ENCODE measurements at regions of chr14 and their contacts with region 1.

Region 1: DNA sequence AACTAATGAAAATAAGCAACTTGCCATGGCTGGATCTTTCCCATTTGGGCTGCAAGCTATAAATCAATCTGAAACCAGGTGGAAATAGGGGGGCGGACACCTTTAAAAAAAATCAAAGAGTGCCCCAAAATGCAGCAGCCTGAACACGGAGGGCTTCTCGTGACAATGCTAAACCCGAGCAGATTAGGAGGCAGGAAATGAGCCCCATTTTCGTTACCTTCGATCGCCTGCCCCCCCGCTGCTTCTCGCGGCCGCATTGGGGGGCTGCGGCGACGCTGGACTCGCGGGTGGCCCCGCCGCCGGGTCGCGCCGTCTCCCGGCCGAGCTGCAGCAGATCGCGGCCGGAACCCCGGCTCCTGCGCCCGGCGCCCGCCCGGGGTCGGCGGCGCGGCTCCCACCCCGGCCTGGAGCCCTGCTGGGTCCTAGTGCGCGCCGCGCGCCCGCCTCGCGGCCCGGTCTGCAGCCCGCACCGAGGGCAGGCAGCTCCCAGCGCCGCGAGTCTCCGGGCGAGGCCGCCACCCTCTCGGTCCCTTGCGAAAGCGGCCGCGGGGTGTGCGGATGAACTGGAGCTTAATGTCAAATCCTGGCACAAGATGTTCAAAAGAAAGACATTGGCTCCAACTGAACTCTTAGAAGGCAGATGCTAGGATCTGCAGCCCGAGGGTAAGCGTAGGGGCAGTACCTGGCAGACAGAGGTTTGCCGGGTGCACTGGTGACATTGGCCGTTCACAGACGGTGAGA is 201.9 kb upstream of the FOXN3 start:
- DNase-seq: peak; percentile 82
- ATAC-seq: peak; percentile 38
- H3K4me3 Mint-ChIP-seq: peak overlapping the region; percentile 95
- H3K27ac Mint-ChIP-seq: peak overlapping the region; percentile 94
- H3K4me1 Mint-ChIP-seq: peaks cover 70% of the 10 kb centered on the region
- H3K27me3 Mint-ChIP-seq: no peaks in the 10 kb centered on the region

Region 2: DNA sequence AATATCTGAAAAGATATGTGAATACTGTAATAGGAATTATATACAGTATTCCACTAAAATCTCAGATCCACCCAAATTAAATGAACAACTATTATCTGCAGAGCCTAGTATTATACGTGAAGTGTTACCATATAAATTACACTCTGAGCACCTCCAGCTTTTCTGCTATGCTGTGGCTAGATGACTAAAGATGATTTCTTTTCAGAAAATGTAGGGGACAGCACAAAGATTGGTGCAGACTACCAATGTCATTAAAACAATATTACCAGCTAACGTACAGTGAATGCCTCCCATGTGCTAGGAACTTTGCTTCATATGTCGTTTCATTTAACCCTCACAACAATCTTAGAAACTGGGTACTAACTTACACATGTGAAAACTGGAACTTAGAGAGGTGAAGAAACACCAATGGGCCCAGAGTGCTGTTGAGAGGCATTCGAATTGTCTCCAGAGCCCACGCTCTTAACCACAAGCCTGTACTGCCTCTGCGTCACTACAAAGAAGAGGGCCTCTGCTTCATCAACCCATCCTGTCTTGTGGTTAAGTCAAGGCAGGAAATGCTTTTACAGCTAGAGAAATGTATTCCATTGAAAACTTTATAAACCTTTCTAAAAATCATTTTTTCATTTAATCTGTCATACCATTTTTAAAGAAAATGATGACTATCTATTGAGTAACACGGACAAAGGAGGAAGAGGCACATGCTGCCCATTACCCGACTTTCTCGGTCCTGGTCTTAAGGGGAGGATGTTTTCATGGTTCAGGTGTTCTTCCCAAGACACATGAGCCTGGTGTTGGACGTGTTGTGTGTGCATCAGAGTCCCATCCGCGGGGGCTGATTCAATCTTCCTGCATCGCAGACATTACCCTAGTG is 1612.8 kb before region 1 on chr14:
- CTCF ChIA-PET with region 1: no interaction called
- POLR2A ChIA-PET with region 1: no interaction called
- intact Hi-C with region 1: loop called in 1 of 2 experiments (anchors 10 kb)
- DNase-seq: peak; percentile 83
- ATAC-seq: peak; percentile 89
- H3K4me3 Mint-ChIP-seq: peak overlapping the region; percentile 82
- H3K27ac Mint-ChIP-seq: peak overlapping the region; percentile 92
- H3K4me1 Mint-ChIP-seq: peaks cover 63% of the 10 kb centered on the region
- H3K27me3 Mint-ChIP-seq: no peaks in the 10 kb centered on the region

Region 3: GRCh38 chr14:89416002-89416995 is 202.7 kb before region 1 on chr14:
- CTCF ChIA-PET with region 1: no interaction called
- POLR2A ChIA-PET with region 1: interaction called, 3 read pairs
- intact Hi-C with region 1: loop called in 1 of 2 experiments (anchors 2 kb)
- DNase-seq: peak; percentile 98
- ATAC-seq: peak; percentile 80
- H3K4me3 Mint-ChIP-seq: peak overlapping the region; percentile 84
- H3K27ac Mint-ChIP-seq: peak overlapping the region; percentile 85
- H3K4me1 Mint-ChIP-seq: peaks cover 51% of the 10 kb centered on the region
- H3K27me3 Mint-ChIP-seq: no peaks in the 10 kb centered on the region

Region 4: DNA sequence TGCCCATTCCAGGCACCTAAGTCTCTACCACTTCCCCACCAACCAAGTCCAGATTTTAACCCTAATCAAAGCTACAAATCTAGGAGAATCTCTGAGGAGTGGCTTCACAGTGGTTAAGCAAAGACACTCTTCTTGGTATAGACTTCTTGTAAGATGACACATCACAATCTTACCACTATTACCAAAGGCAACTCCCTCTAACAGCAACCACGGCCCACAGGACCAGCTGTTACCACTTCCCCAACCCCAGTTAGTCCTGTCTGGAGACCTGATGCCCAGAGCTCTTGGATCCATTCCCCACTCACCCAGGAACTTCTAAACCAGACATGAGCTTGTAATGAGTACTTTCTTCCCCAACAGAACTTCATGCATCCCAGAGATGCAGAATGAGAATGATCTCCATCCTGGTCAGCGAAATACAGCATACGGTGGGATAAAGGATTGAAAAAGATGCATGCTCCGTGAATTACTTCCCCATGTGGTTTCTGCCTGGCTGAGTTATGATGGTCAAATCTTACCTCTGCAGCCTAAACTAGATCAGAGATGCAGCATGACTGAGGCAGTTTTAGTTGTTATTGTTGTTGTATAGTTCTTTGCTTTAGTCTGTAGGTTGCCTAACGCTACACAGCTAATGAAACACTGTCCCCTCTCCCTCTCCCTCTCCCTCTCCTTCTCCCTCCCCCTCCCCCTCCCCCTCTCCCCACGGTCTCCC is 114.2 kb before region 1 on chr14:
- CTCF ChIA-PET with region 1: interaction called, 3 read pairs
- POLR2A ChIA-PET with region 1: no interaction called
- intact Hi-C with region 1: loop called in 1 of 2 experiments (anchors 5 kb)
- DNase-seq: peak; percentile 59
- ATAC-seq: peak; percentile 40
- H3K4me3 Mint-ChIP-seq: no peak overlapping the region
- H3K27ac Mint-ChIP-seq: peak overlapping the region; percentile 23
- H3K4me1 Mint-ChIP-seq: peaks cover 53% of the 10 kb centered on the region
- H3K27me3 Mint-ChIP-seq: no peaks in the 10 kb centered on the region

Region 5: DNA sequence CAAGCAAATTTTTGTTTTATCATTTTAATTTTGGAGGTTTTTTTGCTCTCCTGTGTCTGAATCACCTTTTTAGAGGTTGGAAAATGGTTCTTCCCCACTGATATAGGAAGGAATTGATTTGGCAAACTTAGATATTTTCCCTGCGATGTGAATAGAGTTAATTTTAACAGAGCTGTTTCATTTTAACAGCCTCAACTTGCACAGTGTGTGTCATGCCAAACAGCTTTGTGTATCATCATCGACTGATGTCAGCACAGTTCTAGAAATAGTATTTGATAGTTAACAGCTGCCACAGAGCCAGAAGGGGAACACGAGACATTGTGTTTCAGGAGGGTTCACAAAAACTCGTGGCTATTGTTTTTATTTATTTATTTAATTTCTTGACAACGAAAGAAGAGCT is 41.2 kb after region 1 on chr14:
- CTCF ChIA-PET with region 1: no interaction called
- POLR2A ChIA-PET with region 1: no interaction called
- intact Hi-C with region 1: no loop called
- DNase-seq: no peak
- ATAC-seq: no peak
- H3K4me3 Mint-ChIP-seq: no peak overlapping the region
- H3K27ac Mint-ChIP-seq: no peak overlapping the region
- H3K4me1 Mint-ChIP-seq: peaks cover 11% of the 10 kb centered on the region
- H3K27me3 Mint-ChIP-seq: no peaks in the 10 kb centered on the region

Region 6: DNA sequence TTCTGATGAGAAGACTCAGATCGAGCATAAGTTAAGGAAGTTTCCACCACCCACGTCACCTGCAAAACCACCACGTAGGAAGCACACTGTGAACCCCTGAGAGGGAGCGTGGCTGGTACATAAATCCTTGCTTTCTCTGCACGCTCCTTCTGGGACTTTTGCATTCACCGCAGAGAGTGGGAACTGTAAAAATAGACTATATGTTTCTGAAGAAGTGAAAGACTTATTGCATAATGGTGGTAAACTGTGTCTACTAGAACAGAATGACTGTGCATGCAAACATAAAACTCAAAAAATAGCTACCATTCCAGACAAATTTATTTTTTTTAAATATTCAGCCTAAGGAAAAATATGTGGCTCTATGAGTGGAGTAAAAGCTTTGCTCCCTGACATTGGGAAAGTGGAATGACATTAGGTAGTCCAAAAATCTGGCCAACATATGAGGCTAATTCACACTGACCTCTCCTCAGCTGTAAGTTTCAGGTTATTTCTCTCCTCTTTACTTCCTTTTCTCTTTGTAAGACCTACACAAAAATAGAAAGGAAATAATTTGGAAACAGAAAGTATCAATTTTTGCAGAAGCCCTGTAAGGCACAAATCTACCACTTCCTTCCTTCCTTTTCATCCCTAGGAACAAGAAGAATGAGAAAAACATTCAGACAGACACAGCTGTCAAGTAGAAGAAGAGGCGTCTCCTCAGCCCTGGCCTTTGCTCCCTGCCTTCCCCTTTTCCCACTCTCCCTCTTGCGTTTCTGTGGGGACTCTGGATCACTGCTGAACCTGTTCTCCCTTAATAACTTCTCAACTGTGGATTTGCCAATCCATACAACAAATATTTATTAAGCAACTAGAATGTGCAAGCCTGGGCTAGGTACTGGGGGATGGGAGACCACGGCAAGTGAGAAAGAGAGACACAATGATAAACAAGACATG is 62.4 kb after region 1 on chr14:
- CTCF ChIA-PET with region 1: no interaction called
- POLR2A ChIA-PET with region 1: no interaction called
- intact Hi-C with region 1: loop called (anchors 2 to 5 kb)
- DNase-seq: peak; percentile 81
- ATAC-seq: peak; percentile 88
- H3K4me3 Mint-ChIP-seq: peak overlapping the region; percentile 58
- H3K27ac Mint-ChIP-seq: peak overlapping the region; percentile 83
- H3K4me1 Mint-ChIP-seq: peaks cover 41% of the 10 kb centered on the region
- H3K27me3 Mint-ChIP-seq: no peaks in the 10 kb centered on the region

Region 7: GRCh38 chr14:89750281-89750755 is 131.3 kb after region 1 on chr14:
- CTCF ChIA-PET with region 1: interaction called, 6 read pairs
- POLR2A ChIA-PET with region 1: interaction called, 9 read pairs
- intact Hi-C with region 1: loop called (anchors 1 to 2 kb)
- DNase-seq: no peak
- ATAC-seq: no peak
- H3K4me3 Mint-ChIP-seq: no peak overlapping the region
- H3K27ac Mint-ChIP-seq: peak overlapping the region; percentile 74
- H3K4me1 Mint-ChIP-seq: peaks cover 52% of the 10 kb centered on the region
- H3K27me3 Mint-ChIP-seq: no peaks in the 10 kb centered on the region

Region 8: DNA sequence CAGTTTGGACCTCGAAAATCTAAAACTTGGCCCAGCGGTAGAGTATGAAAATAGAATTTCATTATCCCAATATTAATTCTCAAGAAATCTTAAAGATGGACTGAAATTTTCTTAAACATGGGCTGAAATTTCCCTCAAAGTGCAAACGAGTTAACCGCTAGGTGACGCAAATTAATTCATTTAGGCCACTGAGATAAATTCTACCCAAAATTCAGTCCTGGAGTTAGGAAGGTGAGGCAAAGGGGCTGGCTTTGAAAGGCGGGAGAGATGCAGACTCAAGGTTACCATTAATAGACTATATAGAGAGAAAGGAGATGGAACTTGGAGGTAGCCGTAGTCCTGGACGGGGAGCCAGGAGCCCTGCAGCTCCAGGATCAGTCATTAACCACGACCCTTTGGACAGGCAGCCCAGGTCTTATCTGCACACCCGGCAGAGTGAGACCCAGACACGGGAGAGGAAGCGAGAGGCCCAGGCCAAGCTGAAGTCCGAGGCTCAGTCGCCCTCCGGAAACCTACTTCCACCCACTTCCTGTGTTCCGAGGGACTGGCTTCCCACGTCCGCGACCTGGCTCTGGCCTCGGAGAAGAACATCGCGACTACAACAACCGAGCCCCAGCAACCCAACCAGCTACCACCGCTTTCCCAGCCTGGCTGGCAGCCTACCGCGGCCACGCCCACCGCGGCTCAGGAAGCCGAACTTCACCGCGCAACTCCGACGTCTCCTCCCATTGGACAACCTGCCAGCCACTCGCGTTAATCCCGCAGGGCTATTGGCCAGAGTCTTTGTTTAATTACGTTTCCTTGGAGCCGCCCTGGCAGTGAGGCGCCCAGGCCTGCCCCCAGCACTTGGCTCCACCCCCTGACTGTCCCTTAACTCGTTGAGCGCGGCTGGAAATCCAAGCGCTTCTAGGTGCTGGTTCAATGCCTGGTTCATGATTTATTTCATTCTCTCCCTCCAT is 335.4 kb after region 1 on chr14 and contains the start of gene EFCAB11:
- CTCF ChIA-PET with region 1: no interaction called
- POLR2A ChIA-PET with region 1: no interaction called
- intact Hi-C with region 1: loop called (anchors 2 to 5 kb)
- DNase-seq: peak; percentile 97
- ATAC-seq: peak; percentile 86
- H3K4me3 Mint-ChIP-seq: peak within 1 kb of the TSS; percentile 94
- H3K27ac Mint-ChIP-seq: peak within 1 kb of the TSS; percentile 91
- H3K4me1 Mint-ChIP-seq: peaks cover 32% of the 10 kb centered on the region
- H3K27me3 Mint-ChIP-seq: no peaks in the 10 kb centered on the region
- total RNA-seq, gene EFCAB11: 4.8 to 6.3 TPM